Caco-2 (cell line): ENCODE measurements at regions of chr10 and their contacts with region 1.

Region 1: DNA sequence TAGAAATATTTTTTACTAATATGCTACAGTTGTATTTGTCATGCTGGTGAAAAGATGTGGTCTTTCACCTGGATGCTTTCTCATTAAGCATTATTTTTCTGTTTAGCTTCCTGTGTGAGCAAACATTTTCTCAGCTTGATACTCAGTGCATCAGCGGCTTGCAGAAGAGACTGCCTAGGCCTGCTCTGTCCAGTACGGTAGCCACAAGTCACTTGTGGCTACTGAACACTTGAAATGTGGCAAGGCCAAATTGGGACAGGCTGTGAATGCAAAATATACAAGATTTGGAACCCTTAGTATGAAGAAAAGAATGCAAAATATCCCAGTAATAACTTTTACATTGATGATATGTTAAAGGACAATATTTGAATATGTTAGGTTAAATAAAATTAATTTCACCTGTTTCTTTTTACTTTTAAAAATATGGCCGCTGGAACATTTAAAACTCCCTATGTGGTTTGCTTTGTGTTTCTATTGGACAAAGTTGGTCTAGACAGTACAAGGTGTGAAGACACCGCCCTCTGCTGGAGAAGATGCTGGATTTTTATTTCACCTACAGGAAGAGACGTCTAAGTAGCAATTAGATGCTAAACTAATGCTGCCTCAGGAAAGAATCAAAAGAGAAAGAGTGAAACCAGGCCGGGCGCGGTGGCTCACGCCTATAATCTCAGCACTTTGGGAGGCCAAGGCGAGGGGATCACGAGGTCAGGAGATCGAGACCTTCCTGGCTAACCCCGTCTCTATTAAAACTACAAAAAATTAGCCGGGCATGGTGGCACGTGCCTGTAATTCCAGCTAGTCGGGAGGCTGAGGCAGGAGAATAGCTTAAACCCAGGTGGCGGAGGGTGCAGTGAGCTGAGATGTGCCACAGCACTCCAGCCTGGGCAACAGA is 5.3 kb downstream of the SRGN start:
- DNase-seq: peak; percentile 88 to 91
- H3K4me3 ChIP-seq: no peak overlapping the region
- H3K4me3 Mint-ChIP-seq: no peak overlapping the region
- H3K27ac Mint-ChIP-seq: no peak overlapping the region
- H3K4me1 ChIP-seq: no peaks in the 10 kb centered on the region
- H3K4me1 Mint-ChIP-seq: peaks cover 7% of the 10 kb centered on the region
- H3K27me3 ChIP-seq: no peaks in the 10 kb centered on the region
- H3K27me3 Mint-ChIP-seq: peaks cover 11% of the 10 kb centered on the region
- CTCF ChIP-seq: peak; percentile 93 to 98

Region 2: GRCh38 chr10:68901104-68901927 is 191.9 kb before region 1 on chr10 and contains the start of gene DDX50:
- CTCF ChIA-PET with region 1: no interaction called
- POLR2A ChIA-PET with region 1: no interaction called
- intact Hi-C with region 1: loop called (anchors 1 kb)
- DNase-seq: peak; percentile 100
- H3K4me3 ChIP-seq: peak within 1 kb of the TSS; percentile 67
- H3K4me3 Mint-ChIP-seq: peak within 1 kb of the TSS; percentile 96
- H3K27ac Mint-ChIP-seq: peak within 1 kb of the TSS; percentile 99
- H3K4me1 ChIP-seq: peaks cover 12% of the 10 kb centered on the region
- H3K4me1 Mint-ChIP-seq: peaks cover 40% of the 10 kb centered on the region
- H3K27me3 ChIP-seq: no peaks in the 10 kb centered on the region
- H3K27me3 Mint-ChIP-seq: no peaks in the 10 kb centered on the region
- CTCF ChIP-seq: peak; percentile 51 to 52
- total RNA-seq, gene DDX50: 76.7 and 81.4 TPM in 2 replicates

Region 3: GRCh38 chr10:68981074-68981473 is 112.1 kb before region 1 on chr10:
- CTCF ChIA-PET with region 1: interaction called, 7 read pairs
- POLR2A ChIA-PET with region 1: no interaction called
- intact Hi-C with region 1: loop called (anchors 1 kb)
- DNase-seq: peak in 1 of 2 experiments; percentile 43
- H3K4me3 ChIP-seq: no peak overlapping the region
- H3K4me3 Mint-ChIP-seq: no peak overlapping the region
- H3K27ac Mint-ChIP-seq: peak overlapping the region; percentile 36
- H3K4me1 ChIP-seq: peaks cover 7% of the 10 kb centered on the region; the same call in 1 of the 2 replicates
- H3K4me1 Mint-ChIP-seq: peaks cover 15% of the 10 kb centered on the region
- H3K27me3 ChIP-seq: no peaks in the 10 kb centered on the region
- H3K27me3 Mint-ChIP-seq: no peaks in the 10 kb centered on the region
- CTCF ChIP-seq: peak; percentile 69 to 70

Region 4: DNA sequence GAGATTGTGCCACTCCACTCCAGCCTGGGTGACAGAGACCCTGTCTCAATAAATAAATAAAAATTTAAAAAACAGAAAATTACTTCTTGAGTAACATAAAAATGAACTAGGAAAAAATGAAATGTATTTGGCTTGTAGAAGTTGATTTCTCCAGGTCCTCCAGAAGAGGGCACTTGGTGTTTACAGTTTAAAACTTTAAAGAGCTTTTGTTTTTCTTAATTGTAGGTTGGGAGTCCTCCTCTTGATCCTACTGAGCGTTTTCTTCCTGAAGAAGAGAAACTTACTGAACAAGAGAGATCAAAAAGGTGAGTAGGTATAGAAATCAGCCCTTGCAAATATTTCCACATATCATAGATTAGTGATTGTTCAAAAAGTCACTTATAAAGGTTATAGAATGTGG is 88.4 kb before region 1 on chr10:
- CTCF ChIA-PET with region 1: interaction called, 19 read pairs
- POLR2A ChIA-PET with region 1: no interaction called
- intact Hi-C with region 1: loop called (anchors 1 kb)
- DNase-seq: no peak
- H3K4me3 ChIP-seq: no peak overlapping the region
- H3K4me3 Mint-ChIP-seq: no peak overlapping the region
- H3K27ac Mint-ChIP-seq: no peak overlapping the region
- H3K4me1 ChIP-seq: no peaks in the 10 kb centered on the region
- H3K4me1 Mint-ChIP-seq: no peaks in the 10 kb centered on the region
- H3K27me3 ChIP-seq: no peaks in the 10 kb centered on the region
- H3K27me3 Mint-ChIP-seq: no peaks in the 10 kb centered on the region
- CTCF ChIP-seq: peak; percentile 64 to 75

Region 5: DNA sequence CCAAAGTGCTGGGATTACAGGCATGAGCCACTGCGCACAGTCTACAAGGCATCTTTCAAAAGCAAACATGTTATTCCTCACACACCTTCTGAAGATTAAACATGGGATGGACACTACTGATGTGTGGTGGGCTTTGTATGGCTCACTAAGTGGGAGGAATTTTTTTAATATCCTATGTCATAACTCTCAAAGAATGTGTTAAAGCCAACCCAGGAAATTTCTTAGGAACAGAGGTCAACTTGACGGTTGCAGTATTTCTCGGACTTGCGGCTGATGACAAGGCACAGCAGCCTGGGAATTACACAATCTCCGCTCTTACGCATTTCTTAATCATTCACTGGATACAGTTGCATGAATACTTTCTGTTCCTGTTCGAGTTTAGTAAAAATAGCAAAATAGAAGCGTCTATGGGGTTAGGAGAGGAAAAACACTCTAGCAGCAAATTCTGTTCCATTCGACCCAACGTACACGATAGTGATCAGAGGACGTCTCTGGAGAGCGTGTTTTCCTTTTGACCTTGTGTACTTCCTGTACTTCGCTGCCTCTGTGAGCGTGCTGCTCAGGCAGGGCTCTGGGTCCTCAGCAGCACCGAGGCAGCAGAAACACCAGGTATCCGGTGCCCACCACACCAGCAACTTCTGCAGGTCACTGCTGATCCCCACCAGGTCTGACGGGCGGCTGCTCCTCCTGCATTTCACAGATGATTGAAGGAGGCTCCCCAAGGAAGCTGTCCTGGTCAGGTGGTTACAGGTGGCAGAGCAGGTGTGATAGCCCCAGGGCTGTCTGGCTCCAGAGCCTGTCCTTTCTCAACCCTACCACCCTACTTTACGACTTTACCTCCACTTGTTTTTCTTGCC is 31.7 kb before region 1 on chr10:
- CTCF ChIA-PET with region 1: interaction called, 3 read pairs
- POLR2A ChIA-PET with region 1: no interaction called
- intact Hi-C with region 1: loop called (anchors 1 kb)
- DNase-seq: peak; percentile 66 to 76
- H3K4me3 ChIP-seq: peak overlapping the region; percentile 39
- H3K4me3 Mint-ChIP-seq: peak overlapping the region; percentile 71
- H3K27ac Mint-ChIP-seq: peak overlapping the region; percentile 34
- H3K4me1 ChIP-seq: peaks cover 6% of the 10 kb centered on the region; the same call in 1 of the 2 replicates
- H3K4me1 Mint-ChIP-seq: no peaks in the 10 kb centered on the region
- H3K27me3 ChIP-seq: no peaks in the 10 kb centered on the region
- H3K27me3 Mint-ChIP-seq: peaks cover 5% of the 10 kb centered on the region
- CTCF ChIP-seq: no peak

Region 6: DNA sequence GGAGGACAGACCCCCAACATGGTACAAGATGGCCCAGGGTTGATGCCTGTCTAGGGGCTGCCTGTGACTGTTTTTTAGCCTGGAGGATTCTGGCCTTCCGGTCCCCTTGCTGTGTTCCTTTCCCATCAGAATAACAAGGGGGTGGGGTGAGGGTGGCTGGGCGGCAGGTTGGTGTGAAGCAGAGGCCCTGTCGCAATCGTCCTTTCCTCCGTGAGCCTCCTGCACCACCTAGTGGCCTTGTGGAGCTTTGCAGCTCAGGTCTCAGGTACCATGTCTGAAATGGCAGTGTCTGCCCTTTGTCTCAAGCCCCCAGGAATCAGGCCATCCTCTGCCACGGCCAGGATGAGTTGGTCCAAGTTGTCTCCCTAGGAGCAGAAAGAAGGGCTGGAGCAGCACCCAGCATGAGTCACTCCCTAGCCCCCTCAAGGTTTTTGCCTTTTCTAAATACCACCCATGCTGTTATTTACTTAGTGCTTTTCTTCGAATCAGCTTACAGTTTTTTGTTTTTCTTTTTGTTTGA is 299.3 kb after region 1 on chr10:
- CTCF ChIA-PET with region 1: interaction called, 3 read pairs
- POLR2A ChIA-PET with region 1: no interaction called
- intact Hi-C with region 1: loop called (anchors 1 kb)
- DNase-seq: peak; percentile 91 to 94
- H3K4me3 ChIP-seq: no peak overlapping the region
- H3K4me3 Mint-ChIP-seq: no peak overlapping the region
- H3K27ac Mint-ChIP-seq: no peak overlapping the region
- H3K4me1 ChIP-seq: peaks cover 4% of the 10 kb centered on the region
- H3K4me1 Mint-ChIP-seq: no peaks in the 10 kb centered on the region
- H3K27me3 ChIP-seq: no peaks in the 10 kb centered on the region
- H3K27me3 Mint-ChIP-seq: no peaks in the 10 kb centered on the region
- CTCF ChIP-seq: peak; percentile 99 to 100